Activated naive CD4-positive, alpha-beta T cell treated with anti-CD3 and anti-CD28 coated beads for 36 hours (primary cell): ENCODE measurements at regions of chr10 and their contacts with region 1.

Region 1: DNA sequence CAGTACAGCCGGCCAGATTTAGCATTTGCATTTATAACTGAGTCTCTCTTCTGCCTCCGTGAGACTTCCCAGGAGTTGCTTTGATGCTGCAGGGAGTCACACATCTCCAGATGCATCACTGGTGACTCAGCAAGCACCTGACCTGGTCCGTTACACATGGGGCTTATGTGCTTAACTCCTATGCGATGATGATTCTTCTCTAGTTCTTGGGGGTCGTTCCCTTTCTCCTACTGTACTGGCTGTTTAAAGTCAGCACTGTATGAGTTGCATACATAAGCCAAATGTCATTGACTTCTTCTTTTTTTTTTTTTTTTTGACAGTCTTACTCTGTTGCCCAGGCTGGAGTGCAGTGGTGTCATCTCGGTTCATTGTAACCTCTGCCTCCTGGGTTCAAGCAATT is 13.0 kb upstream of the AKR1E2 start:
- DNase-seq: no peak
- H3K4me3 Mint-ChIP-seq: no peak overlapping the region
- H3K27ac Mint-ChIP-seq: no peak overlapping the region
- H3K4me1 Mint-ChIP-seq: no peaks in the 10 kb centered on the region
- H3K27me3 Mint-ChIP-seq: peaks cover 2% of the 10 kb centered on the region

Region 2: GRCh38 chr10:4833286-4833685 is 20.3 kb after region 1 on chr10:
- CTCF ChIA-PET with region 1: interaction called, 19 read pairs
- intact Hi-C with region 1: no loop called
- DNase-seq: no peak
- H3K4me3 Mint-ChIP-seq: no peak overlapping the region
- H3K27ac Mint-ChIP-seq: no peak overlapping the region
- H3K4me1 Mint-ChIP-seq: peaks cover 42% of the 10 kb centered on the region
- H3K27me3 Mint-ChIP-seq: no peaks in the 10 kb centered on the region

Region 3: GRCh38 chr10:4839401-4839800 is 26.4 kb after region 1 on chr10:
- CTCF ChIA-PET with region 1: interaction called, 14 read pairs
- intact Hi-C with region 1: no loop called
- DNase-seq: no peak
- H3K4me3 Mint-ChIP-seq: no peak overlapping the region
- H3K27ac Mint-ChIP-seq: no peak overlapping the region
- H3K4me1 Mint-ChIP-seq: peaks cover 27% of the 10 kb centered on the region
- H3K27me3 Mint-ChIP-seq: no peaks in the 10 kb centered on the region

Region 4: DNA sequence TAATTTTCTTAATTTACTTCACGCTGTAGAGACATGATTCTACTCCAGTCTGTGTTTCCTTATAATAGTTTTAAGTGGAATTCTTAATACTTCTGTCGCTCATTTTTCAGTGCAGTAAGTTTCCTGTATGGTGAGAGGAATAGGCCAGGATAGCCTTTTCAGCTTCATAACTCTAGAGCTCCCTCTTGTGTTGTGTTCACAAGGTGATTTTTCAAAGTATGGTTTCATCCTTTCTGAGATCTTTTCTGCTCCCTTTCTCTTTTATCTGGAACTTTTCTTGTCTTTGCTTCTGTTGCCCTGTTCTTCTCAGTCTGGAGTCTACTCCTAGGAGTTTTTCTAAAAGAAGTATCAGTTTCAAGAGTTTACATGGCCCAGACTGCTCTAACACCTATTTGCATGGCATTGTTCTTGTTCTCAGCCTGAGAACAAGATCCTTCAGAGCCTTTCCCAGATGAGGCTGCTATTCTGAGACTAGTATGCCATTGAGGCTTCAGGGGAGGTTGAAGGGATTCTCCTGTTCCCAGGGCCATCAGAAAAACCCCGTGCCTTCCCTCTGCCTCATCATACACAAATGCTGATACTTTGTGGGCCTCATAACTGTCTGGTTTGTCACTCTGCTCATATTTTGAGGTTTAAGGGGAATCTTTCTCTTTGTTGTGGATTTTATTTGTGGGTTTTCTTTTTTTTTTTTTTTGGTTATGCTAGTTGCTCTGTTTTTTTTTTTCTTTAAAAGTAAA is 621.2 kb after region 1 on chr10:
- CTCF ChIA-PET with region 1: interaction called, 4 read pairs
- intact Hi-C with region 1: loop called (anchors 2 kb)
- DNase-seq: no peak
- H3K4me3 Mint-ChIP-seq: no peak overlapping the region
- H3K27ac Mint-ChIP-seq: no peak overlapping the region
- H3K4me1 Mint-ChIP-seq: peaks cover 8% of the 10 kb centered on the region
- H3K27me3 Mint-ChIP-seq: no peaks in the 10 kb centered on the region